GM10248 (cell line): ENCODE measurements at regions of chr13 and their contacts with region 1.

Region 1: GRCh38 chr13:45711951-45712350 is 9.8 kb downstream of the CBY2 start:
- DNase-seq: no peak
- CTCF ChIP-seq: no peak

Region 2: GRCh38 chr13:45432737-45433380 is 279.1 kb before region 1 on chr13:
- CTCF ChIA-PET with region 1: no interaction called
- POLR2A ChIA-PET with region 1: no interaction called
- DNase-seq: no peak
- CTCF ChIP-seq: no peak

Region 3: DNA sequence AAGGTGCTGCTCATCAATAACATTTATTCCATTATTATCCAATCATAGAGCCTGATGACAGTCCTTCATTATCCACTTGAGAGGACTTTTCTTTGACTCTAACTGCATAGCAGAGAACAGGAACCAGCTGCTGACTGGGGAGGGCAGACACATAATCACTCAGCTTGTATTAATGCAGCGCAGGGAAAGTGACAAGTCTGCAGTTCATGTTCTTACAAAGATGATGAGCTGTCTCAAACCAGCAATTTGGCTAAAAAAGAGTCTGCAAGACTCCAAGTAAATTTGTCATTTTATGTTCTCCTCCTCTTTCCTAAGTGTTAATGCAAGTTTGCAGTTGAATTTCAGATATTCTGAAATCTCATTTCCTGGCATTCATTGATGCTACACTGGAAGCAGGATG is 49.8 kb before region 1 on chr13:
- CTCF ChIA-PET with region 1: no interaction called
- POLR2A ChIA-PET with region 1: no interaction called
- DNase-seq: no peak
- CTCF ChIP-seq: no peak

Region 4: DNA sequence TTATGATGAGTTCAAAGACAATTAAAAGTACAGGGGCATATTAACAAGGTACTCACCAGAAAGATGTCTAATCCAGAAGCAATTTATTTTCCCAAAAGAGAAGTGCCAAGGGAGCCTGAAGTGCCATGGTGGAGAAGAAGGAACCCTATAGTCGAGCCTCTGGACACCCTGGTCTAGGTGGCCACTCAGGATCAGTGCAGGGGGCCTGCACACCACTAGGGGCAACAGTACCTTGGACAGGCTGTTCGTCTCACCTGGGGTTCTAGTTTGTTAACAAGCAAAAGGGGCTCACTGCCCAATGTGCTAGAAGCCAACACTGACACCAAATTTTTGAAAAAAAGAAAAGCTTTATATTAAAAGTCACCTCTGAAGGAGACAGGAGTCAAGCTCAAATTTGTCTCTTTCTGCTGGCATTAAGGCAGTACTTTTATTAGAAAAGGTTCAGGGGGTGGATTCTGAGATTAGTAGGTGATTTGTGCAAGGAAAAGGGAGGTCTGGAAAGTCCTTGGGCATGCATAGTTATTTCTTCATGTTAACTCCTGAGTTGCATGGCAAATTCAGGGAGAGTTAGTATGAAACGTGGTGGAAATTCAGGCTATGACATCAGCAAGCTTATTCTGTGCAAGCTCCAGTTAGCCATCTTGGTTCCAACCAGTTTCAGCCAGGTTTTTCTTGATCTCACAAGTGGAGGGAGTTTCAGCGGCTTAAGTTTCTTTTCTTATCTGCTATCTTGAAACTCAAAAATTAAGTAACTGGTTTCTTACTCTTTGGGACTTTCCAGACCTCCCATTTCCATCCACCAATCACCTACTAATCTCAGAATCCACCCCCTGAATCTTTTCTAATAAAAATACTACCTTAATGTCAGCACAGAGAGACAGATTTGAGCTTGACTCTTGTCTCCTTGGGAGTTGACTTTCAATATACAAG is 10.7 kb before region 1 on chr13:
- CTCF ChIA-PET with region 1: interaction called, 61 read pairs
- POLR2A ChIA-PET with region 1: no interaction called
- DNase-seq: peak; percentile 29
- CTCF ChIP-seq: peak; percentile 59